ENCODE measurements at regions of chr1 and their contacts with region 1.

Region 1: DNA sequence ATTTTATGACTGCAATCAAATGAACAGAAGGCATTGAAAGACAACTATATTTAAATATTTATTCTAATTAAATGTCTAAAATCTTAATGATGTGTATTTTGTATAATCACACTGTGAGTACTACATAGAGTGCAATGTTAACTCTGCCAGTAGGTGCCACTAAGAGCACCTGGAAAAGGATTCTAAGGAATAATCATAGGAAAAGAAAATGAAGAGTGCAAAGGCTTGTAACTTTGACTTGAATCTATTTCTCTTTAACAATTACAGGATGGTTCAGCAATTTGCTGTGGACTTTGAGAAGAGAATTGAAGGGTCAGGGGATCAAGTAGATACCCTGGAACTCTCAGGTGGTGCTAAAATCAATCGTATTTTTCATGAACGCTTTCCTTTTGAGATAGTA is 200.4 kb downstream of the DNM3 start:
- DNase-seq: peak; percentile 16
- H3K4me3 Mint-ChIP-seq: no peak overlapping the region
- H3K27ac Mint-ChIP-seq: no peak overlapping the region
- H3K4me1 Mint-ChIP-seq: peaks cover 21% of the 10 kb centered on the region
- H3K27me3 Mint-ChIP-seq: no peaks in the 10 kb centered on the region
- CTCF ChIP-seq: peak; percentile 19

Region 2: GRCh38 chr1:172054172-172054571 is 12.4 kb after region 1 on chr1:
- CTCF ChIA-PET with region 1: interaction called, 20 read pairs
- POLR2A ChIA-PET with region 1: interaction called, 3 read pairs
- intact Hi-C with region 1: no loop called
- DNase-seq: peak; percentile 18
- H3K4me3 Mint-ChIP-seq: no peak overlapping the region
- H3K27ac Mint-ChIP-seq: no peak overlapping the region
- H3K4me1 Mint-ChIP-seq: peaks cover 6% of the 10 kb centered on the region
- H3K27me3 Mint-ChIP-seq: no peaks in the 10 kb centered on the region
- CTCF ChIP-seq: no peak

Region 3: DNA sequence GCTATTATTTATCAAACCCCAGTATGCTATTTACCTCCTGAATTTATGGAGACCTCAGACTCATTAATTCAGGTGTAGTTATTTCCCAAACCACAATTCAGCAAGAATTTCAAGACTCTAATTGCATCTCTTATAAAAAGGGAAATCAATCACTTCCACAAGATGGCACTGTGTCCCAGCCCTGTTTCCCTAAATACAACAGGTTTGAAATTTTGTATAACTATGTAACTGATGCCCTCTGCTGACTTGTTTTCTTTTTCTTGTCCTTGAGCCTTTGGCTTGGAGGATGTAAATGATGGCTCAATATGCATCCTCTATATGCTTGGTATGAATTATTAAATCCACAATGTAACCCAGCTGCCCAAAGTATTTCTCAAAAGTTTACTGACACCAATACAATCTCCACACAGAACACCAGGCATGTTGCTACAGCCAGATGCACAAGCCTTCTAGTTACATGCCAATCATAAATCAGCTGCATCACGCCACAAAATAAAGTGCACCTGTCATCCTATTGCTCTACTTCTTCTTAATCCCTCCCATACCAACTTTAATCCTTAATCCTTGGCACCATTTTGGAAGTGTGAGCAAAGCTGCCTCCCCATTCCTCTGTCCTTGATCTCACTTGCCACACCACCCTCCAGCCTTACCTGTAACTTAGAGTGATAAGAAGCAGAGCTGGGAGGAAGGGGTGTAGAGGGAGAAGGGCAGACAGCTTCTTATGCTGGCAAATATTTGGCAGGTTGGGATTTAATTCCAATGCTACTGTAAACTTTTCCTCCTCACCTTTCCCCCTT is 387.8 kb after region 1 on chr1:
- CTCF ChIA-PET with region 1: interaction called, 15 read pairs
- POLR2A ChIA-PET with region 1: no interaction called
- intact Hi-C with region 1: no loop called
- DNase-seq: peak; percentile 83
- H3K4me3 Mint-ChIP-seq: no peak overlapping the region
- H3K27ac Mint-ChIP-seq: no peak overlapping the region
- H3K4me1 Mint-ChIP-seq: peaks cover 5% of the 10 kb centered on the region
- H3K27me3 Mint-ChIP-seq: no peaks in the 10 kb centered on the region
- CTCF ChIP-seq: peak; percentile 78